ENCODE measurements at regions of chr11 and their contacts with region 1.

Region 1: DNA sequence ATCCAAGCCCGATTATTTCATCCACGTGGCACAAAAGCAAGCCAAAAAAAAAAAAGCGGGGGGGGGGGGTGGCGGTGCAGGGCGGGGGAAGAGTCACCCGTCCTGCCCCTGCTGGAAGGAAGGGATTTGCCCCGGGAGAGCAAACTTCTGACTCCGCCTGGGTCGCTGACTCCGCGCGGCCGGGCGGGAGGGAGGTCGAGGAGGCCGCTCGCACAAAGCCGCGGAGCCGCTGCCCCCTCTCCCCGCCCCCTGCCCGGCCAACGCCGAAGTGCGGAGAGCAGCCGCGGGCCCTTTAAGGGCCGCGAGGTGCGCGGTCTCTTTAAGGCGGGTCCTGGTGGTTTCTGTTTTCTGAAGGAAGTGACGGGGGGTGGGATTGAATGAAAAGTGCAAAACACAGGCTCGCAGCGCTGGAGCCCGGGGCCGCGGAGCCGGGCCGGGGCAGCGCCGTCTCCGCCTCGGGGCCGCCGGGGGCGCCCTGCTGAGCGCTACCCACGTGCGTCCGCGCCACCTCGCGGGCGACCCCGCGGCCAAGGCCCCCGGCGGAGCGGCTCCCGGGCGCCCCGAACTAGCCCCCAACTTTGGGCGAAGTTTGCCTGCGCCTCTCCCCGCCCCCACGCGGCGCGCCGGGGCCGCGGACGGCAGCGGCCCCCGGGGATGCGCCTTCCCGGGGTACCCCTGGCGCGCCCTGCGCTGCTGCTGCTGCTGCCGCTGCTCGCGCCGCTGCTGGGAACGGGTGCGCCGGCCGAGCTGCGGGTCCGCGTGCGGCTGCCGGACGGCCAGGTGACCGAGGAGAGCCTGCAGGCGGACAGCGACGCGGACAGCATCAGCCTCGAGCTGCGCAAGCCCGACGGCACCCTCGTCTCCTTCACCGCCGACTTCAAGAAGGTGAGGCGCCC is at the start of gene OAF:
- DNase-seq: no peak
- H3K4me3 ChIP-seq: peak within 1 kb of the TSS; percentile 74
- CTCF ChIP-seq: peak; percentile 21

Region 2: DNA sequence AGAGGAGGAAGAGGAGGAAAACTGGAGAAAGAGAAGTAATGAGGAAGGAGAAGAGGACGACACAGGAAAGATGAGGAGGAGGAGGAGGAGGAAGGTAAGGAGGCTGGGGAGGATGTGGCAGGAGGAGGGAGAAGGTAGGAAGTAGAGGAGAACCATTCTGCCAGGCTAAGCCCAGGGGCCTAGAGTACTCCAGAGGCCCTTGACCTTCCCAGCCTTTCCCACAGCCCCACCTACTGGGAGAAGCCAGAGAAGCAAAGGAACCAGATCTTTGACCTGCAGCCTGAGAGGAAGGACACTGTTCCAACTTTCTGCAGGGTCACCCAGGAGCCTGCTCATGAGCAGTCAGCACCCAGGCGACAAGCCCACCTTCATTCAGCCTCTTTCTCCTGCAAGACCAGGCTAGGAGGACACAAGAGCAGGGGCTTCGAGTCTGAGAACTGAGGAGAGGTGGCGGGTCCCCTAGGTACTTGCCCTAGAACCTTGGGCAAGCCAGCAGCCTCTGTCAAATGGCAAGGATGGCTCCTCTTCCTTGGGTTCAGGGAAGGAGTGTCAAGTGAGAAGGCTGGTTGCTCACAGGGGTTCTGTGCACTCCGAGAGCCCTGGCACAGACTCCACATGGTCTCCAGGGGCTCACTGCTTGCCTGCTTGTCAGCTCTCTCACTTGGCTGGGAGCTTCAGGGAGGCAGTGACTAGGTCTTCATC is 27.9 kb before region 1 on chr11:
- CTCF ChIA-PET with region 1: interaction called, 21 read pairs
- POLR2A ChIA-PET with region 1: no interaction called
- DNase-seq: no peak
- H3K4me3 ChIP-seq: no peak overlapping the region
- CTCF ChIP-seq: peak; percentile 28

Region 3: DNA sequence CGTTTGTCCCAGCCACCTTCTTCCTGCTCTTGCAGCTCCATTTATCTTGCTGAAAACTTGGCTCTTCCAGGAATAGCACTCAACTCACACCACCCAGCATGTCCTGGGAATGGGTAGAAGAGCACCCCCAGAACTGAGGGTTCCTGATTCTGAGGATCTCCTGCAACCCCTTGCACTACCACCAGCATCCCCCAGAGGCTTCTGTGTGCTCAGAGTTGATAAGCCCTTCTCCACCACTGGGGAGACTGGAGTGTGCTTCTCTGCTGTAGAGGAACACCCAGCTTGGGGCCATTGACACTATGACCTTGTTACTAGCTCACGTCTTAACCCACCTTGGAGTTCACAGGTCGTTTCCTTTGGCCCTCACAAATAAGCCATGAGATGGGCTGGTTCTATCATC is 421.7 kb after region 1 on chr11:
- CTCF ChIA-PET with region 1: no interaction called
- POLR2A ChIA-PET with region 1: no interaction called
- DNase-seq: no peak
- H3K4me3 ChIP-seq: no peak overlapping the region
- CTCF ChIP-seq: no peak

Region 4: GRCh38 chr11:120735035-120735434 is 524.2 kb after region 1 on chr11:
- CTCF ChIA-PET with region 1: no interaction called
- POLR2A ChIA-PET with region 1: no interaction called
- DNase-seq: no peak
- H3K4me3 ChIP-seq: no peak overlapping the region
- CTCF ChIP-seq: no peak